Calu3 (cell line): ENCODE measurements at regions of chr5 and their contacts with region 1.

Region 1: DNA sequence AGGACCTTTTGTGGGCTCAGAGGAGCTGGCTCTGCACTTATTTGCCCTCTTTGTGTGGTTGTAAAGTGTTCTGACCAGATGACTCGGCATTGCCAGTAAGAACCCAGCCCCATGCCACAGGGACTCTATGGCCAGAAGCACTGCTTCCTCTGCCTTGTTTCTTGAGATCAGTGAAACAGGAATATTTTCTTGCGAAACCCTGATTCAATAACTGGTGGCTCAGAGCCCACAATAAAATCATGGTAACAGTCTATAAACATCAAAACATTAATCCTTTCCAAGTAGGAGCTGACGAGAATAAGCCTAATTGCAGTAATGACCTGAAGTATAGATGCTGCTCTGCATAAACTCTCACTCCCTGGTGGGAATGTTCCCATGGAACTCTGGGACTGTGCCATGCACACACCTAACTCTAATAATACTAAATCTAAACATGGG is 344.3 kb downstream of the ZNF608 start:
- DNase-seq: peak; percentile 58
- H3K4me3 Mint-ChIP-seq: no peak overlapping the region
- H3K27ac Mint-ChIP-seq: peak overlapping the region; percentile 74
- H3K4me1 Mint-ChIP-seq: peaks cover 27% of the 10 kb centered on the region
- H3K27me3 Mint-ChIP-seq: no peaks in the 10 kb centered on the region
- CTCF ChIP-seq: no peak

Region 2: GRCh38 chr5:124330595-124331220 is 71.5 kb before region 1 on chr5:
- CTCF ChIA-PET with region 1: no interaction called
- intact Hi-C with region 1: no loop called
- DNase-seq: no peak
- H3K4me3 Mint-ChIP-seq: no peak overlapping the region
- H3K27ac Mint-ChIP-seq: no peak overlapping the region
- H3K4me1 Mint-ChIP-seq: no peaks in the 10 kb centered on the region
- H3K27me3 Mint-ChIP-seq: peaks cover 14% of the 10 kb centered on the region
- CTCF ChIP-seq: no peak

Region 3: GRCh38 chr5:124599028-124599973 is 197.1 kb after region 1 on chr5:
- CTCF ChIA-PET with region 1: no interaction called
- intact Hi-C with region 1: loop called (anchors 1 kb)
- DNase-seq: peak; percentile 67
- H3K4me3 Mint-ChIP-seq: peak overlapping the region; percentile 24
- H3K27ac Mint-ChIP-seq: peak overlapping the region; percentile 74
- H3K4me1 Mint-ChIP-seq: peaks cover 43% of the 10 kb centered on the region
- H3K27me3 Mint-ChIP-seq: no peaks in the 10 kb centered on the region
- CTCF ChIP-seq: no peak

Region 4: DNA sequence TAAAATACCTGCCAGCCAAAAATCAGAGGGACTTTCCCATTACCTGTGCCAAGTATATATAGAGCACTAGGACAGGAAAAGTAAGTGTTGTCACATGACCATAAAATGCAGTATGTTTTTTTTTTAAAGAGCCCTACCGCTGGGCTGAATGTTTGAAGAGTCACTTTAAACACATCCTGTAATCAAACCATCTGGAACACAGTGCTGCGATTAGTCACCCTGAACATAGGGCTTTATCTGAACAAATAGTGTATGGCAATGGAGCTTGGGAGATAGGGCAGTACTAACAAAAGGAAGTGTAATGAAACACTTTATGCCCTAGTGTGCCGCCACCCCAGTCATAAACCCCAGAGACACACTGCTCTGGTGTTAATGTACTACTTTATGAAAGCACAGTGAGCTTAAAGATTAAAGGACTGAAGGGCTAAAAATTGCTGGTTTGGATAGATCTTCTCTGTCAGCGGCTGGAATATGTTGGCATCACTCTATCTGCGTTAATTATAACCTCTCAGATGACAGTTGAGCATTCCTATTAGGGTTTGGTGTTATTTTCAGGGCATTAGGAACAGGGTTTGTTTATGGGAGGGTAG is 253.9 kb after region 1 on chr5:
- CTCF ChIA-PET with region 1: no interaction called
- intact Hi-C with region 1: loop called (anchors 5 kb)
- DNase-seq: peak; percentile 64
- H3K4me3 Mint-ChIP-seq: no peak overlapping the region
- H3K27ac Mint-ChIP-seq: no peak overlapping the region
- H3K4me1 Mint-ChIP-seq: peaks cover 64% of the 10 kb centered on the region
- H3K27me3 Mint-ChIP-seq: no peaks in the 10 kb centered on the region
- CTCF ChIP-seq: no peak